K562 (cell line): ENCODE measurements at regions of chr17 and their contacts with region 1.

Region 1: DNA sequence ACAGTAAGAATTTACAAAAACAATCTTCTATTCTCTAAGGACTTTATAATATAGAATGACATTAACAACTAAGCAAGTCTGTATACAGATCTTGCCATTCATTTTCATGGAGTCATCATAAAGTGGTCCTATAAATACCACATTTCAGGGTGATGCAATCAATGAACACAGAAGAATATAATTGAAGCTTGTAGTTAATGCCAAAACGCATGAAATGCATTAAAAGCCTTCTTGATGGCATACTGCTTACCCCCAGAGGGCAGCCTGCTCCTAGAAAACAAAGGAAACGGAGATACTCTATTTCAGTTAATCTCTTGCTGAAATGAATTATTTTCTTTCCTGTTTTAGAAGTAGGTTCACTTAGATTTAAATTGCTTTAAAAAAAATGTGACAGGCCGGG is 45.2 kb upstream of the STAC2 start:
- DNase-seq: peak in 2 of 4 experiments; percentile 41 to 61
- ATAC-seq: peak; percentile 82
- H3K4me3 ChIP-seq: no peak overlapping the region
- H3K27ac ChIP-seq: no peak overlapping the region
- H3K4me1 ChIP-seq: peaks cover 0 to 4% of the 10 kb centered on the region in 2 experiments; a peak in 1 of 5 replicates
- H3K27me3 ChIP-seq: no peaks in the 10 kb centered on the region
- CTCF ChIP-seq: peak; percentile 54 to 80 (median 63)
- EP300 ChIP-seq: no peak
- POLR2A ChIP-seq: no peak
- RAD21 ChIP-seq: peak; percentile 60 to 91

Region 2: DNA sequence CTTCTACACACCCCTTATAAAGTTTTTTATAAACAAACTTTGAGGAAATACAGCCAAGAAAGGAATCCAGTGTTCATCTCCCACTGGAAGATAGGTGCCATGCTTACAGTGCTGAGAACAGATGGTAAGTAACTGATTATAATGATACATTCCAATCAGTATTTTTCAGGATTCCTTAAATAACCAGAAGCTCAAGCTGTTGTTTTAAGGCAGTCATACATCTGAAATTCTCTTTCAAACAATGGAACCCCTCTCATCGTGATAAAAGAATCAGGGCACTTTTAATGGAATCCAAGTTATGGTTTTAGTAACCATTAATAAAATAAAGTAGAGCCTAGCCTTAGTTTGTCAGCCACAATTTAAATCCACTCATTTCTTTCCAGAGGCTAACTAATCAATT is 10.9 kb after region 1 on chr17:
- CTCF ChIA-PET with region 1: no interaction called
- POLR2A ChIA-PET with region 1: interaction called, 13 read pairs
- in situ Hi-C with region 1: no loop called
- intact Hi-C with region 1: no loop called
- DNase-seq: peak; percentile 18 to 51 (median 36)
- ATAC-seq: no peak
- H3K4me3 ChIP-seq: no peak overlapping the region
- H3K27ac ChIP-seq: peak overlapping the region; percentile 9; the same call in 2 of the 3 replicates
- H3K4me1 ChIP-seq: peaks cover 10 to 20% of the 10 kb centered on the region in 2 experiments
- H3K27me3 ChIP-seq: no peaks in the 10 kb centered on the region
- CTCF ChIP-seq: no peak
- EP300 ChIP-seq: peak; percentile 10; the same call in 1 of the 2 replicates
- POLR2A ChIP-seq: no peak
- RAD21 ChIP-seq: no peak

Region 3: DNA sequence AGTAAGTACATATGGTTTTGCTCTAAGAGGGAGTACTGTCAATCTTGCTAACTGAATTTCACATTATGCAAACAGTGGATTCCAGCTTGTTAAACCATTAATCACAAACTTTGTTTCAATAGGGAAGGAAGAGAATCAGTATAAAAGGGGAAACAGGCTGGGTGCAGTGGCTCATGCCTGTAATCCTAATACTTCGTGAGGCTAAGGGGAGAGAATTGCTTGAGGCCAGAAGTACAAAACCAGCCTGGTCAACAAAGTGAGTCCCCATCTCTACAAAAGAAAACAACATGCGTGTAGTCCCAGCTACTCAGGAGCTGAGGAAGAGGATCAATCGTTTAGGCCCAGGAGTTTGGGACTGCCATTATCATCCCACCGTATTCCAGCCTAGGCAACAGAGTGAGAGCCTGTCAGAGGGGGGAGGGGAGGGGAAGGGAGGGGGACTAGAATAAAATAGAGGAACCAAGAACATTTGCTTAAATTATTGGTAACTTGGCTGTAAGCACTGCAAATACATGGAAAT is 64.8 kb after region 1 on chr17:
- CTCF ChIA-PET with region 1: no interaction called
- POLR2A ChIA-PET with region 1: no interaction called
- in situ Hi-C with region 1: no loop called
- intact Hi-C with region 1: loop called (anchors 5 kb)
- DNase-seq: peak in 2 of 4 experiments; percentile 31 to 50
- ATAC-seq: peak; percentile 50
- H3K4me3 ChIP-seq: no peak overlapping the region
- H3K27ac ChIP-seq: peak overlapping the region; percentile 88
- H3K4me1 ChIP-seq: peaks cover 21 to 30% of the 10 kb centered on the region in 2 experiments
- H3K27me3 ChIP-seq: no peaks in the 10 kb centered on the region
- CTCF ChIP-seq: no peak
- EP300 ChIP-seq: no peak
- POLR2A ChIP-seq: no peak
- RAD21 ChIP-seq: no peak

Region 4: DNA sequence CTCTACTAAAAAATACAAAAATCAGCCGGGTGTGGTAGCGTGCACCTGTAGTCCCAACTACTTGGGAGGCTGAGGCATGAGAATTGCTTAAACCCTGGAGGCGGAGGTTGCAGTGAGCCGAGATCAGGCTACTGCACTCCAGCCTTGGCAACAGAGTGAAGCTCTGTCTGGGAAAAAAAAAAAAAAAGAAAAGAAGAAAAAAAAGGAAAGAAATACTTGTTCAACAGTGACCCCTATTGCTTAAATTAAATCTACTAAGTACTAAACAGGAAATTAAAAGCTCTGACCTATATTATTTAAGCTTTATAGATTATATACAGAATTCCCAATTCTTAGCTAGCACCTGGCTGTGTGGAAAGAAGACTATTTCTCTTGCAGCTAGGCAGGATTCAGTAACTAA is 81.6 kb after region 1 on chr17:
- CTCF ChIA-PET with region 1: interaction called, 10 read pairs
- POLR2A ChIA-PET with region 1: no interaction called
- in situ Hi-C with region 1: no loop called
- intact Hi-C with region 1: loop called (anchors 2 kb)
- DNase-seq: no peak
- ATAC-seq: peak; percentile 66
- H3K4me3 ChIP-seq: no peak overlapping the region
- H3K27ac ChIP-seq: peak overlapping the region; percentile 60; the same call in 2 of the 3 replicates
- H3K4me1 ChIP-seq: peaks cover 0 to 6% of the 10 kb centered on the region in 2 experiments; a peak in 3 of 5 replicates
- H3K27me3 ChIP-seq: no peaks in the 10 kb centered on the region
- CTCF ChIP-seq: peak in 1 of 3 experiments; percentile 51; a peak in 2 of 6 replicates
- EP300 ChIP-seq: no peak
- POLR2A ChIP-seq: no peak
- RAD21 ChIP-seq: peak in 1 of 2 experiments; percentile 38; a peak in 2 of 4 replicates

Region 5: DNA sequence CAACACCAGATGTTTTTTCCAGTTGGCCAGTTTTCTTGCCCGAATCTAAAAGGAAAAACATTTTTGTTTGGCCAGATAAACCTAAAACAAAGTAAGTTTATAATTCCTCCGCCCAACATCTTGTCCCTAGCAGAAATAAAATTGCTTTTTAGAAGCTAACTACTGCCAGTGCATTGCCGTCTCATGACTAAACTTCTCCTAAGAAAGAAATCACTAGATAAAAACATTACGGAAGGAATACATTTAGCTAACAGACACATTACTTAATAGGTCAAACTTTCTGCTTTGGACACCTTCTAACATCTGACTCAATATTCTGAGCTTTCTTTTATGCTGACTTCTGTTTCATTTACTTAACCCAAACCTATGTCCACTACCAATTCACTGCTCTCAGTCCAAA is 94.3 kb after region 1 on chr17:
- CTCF ChIA-PET with region 1: no interaction called
- POLR2A ChIA-PET with region 1: no interaction called
- in situ Hi-C with region 1: no loop called
- intact Hi-C with region 1: no loop called
- DNase-seq: no peak
- ATAC-seq: peak; percentile 18; the same call in 2 of the 3 replicates
- H3K4me3 ChIP-seq: peak overlapping the region; percentile 32; the same call in 1 of the 2 replicates
- H3K27ac ChIP-seq: peak overlapping the region; percentile 82
- H3K4me1 ChIP-seq: peaks cover 4 to 14% of the 10 kb centered on the region in 2 experiments; a peak in 3 of 5 replicates
- H3K27me3 ChIP-seq: no peaks in the 10 kb centered on the region
- CTCF ChIP-seq: no peak
- EP300 ChIP-seq: no peak
- POLR2A ChIP-seq: no peak
- RAD21 ChIP-seq: no peak

Region 6: DNA sequence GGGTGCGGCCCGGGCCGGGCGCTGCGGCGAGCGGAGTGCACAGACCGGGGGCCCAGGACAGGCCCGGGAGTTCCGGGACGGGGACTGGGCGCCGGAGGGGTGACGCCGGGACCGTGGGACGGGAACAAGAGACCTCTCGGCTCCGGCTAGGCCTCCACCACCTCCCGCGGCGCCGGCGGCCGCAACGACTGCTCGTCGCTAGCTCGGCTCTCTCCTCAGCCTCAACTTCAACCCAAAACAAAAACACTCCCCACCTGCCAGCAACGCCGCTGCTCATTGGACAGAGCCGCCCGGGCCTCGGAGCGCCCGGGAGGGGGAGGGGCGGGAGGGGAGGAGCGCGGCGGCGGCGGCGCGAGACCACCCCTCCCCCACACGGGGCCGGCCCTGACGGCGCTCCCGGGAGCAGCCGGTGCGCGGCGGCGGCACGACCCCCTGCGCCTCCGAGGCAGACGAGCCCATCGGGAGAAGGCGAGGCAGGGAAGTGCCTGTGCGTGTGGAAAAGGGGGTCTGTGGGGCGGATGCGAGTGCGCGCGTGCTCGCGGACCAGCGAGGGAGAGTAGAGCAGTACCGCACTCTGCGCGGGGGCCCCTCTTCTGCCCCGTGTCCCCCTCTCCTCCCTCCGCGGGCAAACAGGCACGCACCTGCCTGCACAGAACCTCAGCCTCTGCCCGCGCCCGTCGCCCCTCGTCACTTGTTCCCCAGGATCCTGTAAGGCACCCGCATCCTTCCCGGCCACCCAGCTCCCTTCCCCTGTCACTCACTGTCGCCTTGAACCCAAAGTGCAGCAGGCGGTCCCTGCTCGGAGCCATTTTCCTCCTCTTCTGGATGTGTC is 130.7 kb after region 1 on chr17 and contains the start of gene FBXL20:
- CTCF ChIA-PET with region 1: no interaction called
- POLR2A ChIA-PET with region 1: interaction called, 3 read pairs
- in situ Hi-C with region 1: no loop called
- intact Hi-C with region 1: loop called (anchors 5 kb)
- DNase-seq: peak; percentile 95 to 99 (median 99)
- ATAC-seq: peak; percentile 81
- H3K4me3 ChIP-seq: peak within 1 kb of the TSS; percentile 96
- H3K27ac ChIP-seq: peak within 1 kb of the TSS; percentile 86
- H3K4me1 ChIP-seq: peaks cover 9 to 16% of the 10 kb centered on the region in 2 experiments; a peak in 3 of 5 replicates
- H3K27me3 ChIP-seq: no peaks in the 10 kb centered on the region
- CTCF ChIP-seq: no peak
- EP300 ChIP-seq: no peak
- POLR2A ChIP-seq: peak; percentile 78
- RAD21 ChIP-seq: no peak
- polyA plus RNA-seq, gene FBXL20: 1.8 to 3.0 TPM

Region 7: GRCh38 chr17:39547713-39548478 is 277.0 kb after region 1 on chr17:
- CTCF ChIA-PET with region 1: interaction called, 17 read pairs
- POLR2A ChIA-PET with region 1: no interaction called
- in situ Hi-C with region 1: no loop called
- intact Hi-C with region 1: no loop called
- DNase-seq: peak; percentile 75 to 79 (median 76)
- ATAC-seq: peak; percentile 95
- H3K4me3 ChIP-seq: no peak overlapping the region
- H3K27ac ChIP-seq: no peak overlapping the region
- H3K4me1 ChIP-seq: no peaks in the 10 kb centered on the region
- H3K27me3 ChIP-seq: no peaks in the 10 kb centered on the region
- CTCF ChIP-seq: peak; percentile 86 to 97 (median 88)
- EP300 ChIP-seq: no peak
- POLR2A ChIP-seq: no peak
- RAD21 ChIP-seq: peak; percentile 51 to 79; a peak in 3 of 4 replicates